T-cell (primary cell): ENCODE measurements at regions of chr6 and their contacts with region 1.

Region 1: GRCh38 chr6:38438097-38438496 is 201.6 kb downstream of the BTBD9 start:
- DNase-seq: no peak
- ATAC-seq: no peak
- H3K4me3 ChIP-seq: no peak overlapping the region
- H3K4me3 Mint-ChIP-seq: no peak overlapping the region
- H3K27ac ChIP-seq: no peak overlapping the region
- H3K27ac Mint-ChIP-seq: no peak overlapping the region
- H3K4me1 ChIP-seq: no peaks in the 10 kb centered on the region
- H3K4me1 Mint-ChIP-seq: peaks cover 15 to 21% (median 17%) of the 10 kb centered on the region in 3 donors
- H3K27me3 ChIP-seq: no peaks in the 10 kb centered on the region
- H3K27me3 Mint-ChIP-seq: no peaks in the 10 kb centered on the region

Region 2: GRCh38 chr6:38100380-38100779 is 337.7 kb before region 1 on chr6:
- CTCF ChIA-PET with region 1: no interaction called
- POLR2A ChIA-PET with region 1: interaction called in 1 of 2 experiments, 11 read pairs
- DNase-seq: no peak
- ATAC-seq: no peak
- H3K4me3 ChIP-seq: no peak overlapping the region
- H3K4me3 Mint-ChIP-seq: no peak overlapping the region
- H3K27ac ChIP-seq: no peak overlapping the region
- H3K27ac Mint-ChIP-seq: no peak overlapping the region
- H3K4me1 ChIP-seq: no peaks in the 10 kb centered on the region
- H3K4me1 Mint-ChIP-seq: peaks cover 12 to 15% (median 13%) of the 10 kb centered on the region in 3 donors
- H3K27me3 ChIP-seq: no peaks in the 10 kb centered on the region
- H3K27me3 Mint-ChIP-seq: no peaks in the 10 kb centered on the region